ENCODE measurements at regions of chr7 and their contacts with region 1.

Region 1: DNA sequence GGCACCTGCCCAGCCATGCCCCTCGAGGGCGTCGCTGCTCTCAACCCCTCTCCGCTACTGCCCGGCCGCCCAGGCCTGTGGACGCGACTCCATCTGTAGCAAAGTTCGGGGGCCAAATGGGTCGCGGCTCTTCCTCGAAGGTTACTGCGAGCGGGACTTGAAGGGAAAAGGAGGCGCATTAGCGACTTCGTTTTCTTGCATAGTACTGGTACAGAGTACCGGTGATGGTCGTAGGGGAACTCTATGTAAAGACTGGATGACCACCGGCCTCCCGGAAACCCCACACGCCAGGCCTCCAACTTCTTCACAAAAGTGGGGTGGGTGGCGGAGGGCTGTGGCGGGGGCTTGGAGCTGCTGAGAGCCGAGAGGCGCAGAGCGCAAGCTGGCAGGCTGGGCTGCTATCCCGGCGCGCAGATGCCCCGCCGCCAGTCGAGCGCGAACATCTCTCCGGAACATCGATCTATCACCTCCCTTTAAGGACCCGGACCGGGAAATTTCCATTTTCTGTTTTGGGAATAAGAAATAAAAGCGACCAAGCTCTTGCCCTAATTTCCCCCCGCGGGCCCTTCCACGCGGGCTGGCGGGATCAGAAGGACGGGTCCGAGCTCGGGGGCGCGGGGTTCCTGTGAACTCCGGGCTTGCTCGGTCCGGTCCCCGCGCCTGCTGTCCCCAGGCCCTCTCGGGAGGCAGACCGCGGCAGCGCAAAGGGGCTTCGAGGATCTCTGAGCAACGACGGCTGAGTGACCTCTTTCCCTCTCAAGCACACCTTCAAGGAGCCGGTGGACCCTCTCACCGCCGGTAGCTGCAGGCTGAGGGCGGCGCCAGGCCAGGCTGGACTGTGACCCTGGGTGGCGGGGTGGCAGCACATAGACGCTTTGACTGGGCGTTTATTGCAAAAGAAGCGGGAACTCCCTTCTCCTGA is 12.2 kb upstream of the FEZF1 start:
- DNase-seq: peak in 1 of 2 experiments; percentile 81
- H3K4me3 ChIP-seq: peak overlapping the region; percentile 29 to 64 (median 51)
- H3K27ac ChIP-seq: no peak overlapping the region
- H3K4me1 ChIP-seq: peaks cover 3 to 23% (median 11%) of the 10 kb centered on the region in 4 experiments; a peak in 6 of 7 replicates
- H3K27me3 ChIP-seq: peaks cover 20 to 56% (median 39%) of the 10 kb centered on the region in 4 experiments
- CTCF ChIP-seq: no peak
- EP300 ChIP-seq: no peak
- POLR2A ChIP-seq: no peak
- RAD21 ChIP-seq: 0 out of 4 replicates have a peak, but pooled peaks of 1 of the 2 experiments have one; percentile 10

Region 2: GRCh38 chr7:122300211-122300932 is 16.4 kb before region 1 on chr7:
- CTCF ChIA-PET with region 1: interaction called, 10 read pairs
- POLR2A ChIA-PET with region 1: interaction called, 15 read pairs
- DNase-seq: peak in 1 of 2 experiments; percentile 74
- H3K4me3 ChIP-seq: peak overlapping the region; percentile 66 to 82 (median 76)
- H3K27ac ChIP-seq: no peak overlapping the region
- H3K4me1 ChIP-seq: peaks cover 5 to 28% (median 12%) of the 10 kb centered on the region in 4 experiments
- H3K27me3 ChIP-seq: peaks cover 41 to 68% (median 62%) of the 10 kb centered on the region in 4 experiments
- CTCF ChIP-seq: no peak
- EP300 ChIP-seq: no peak
- POLR2A ChIP-seq: no peak
- RAD21 ChIP-seq: no peak; a peak in 1 of 4 replicates

Region 3: GRCh38 chr7:122329145-122329802 is 12.5 kb after region 1 on chr7:
- CTCF ChIA-PET with region 1: interaction called, 11 read pairs
- POLR2A ChIA-PET with region 1: interaction called, 4 read pairs
- DNase-seq: peak in 1 of 2 experiments; percentile 59
- H3K4me3 ChIP-seq: peak overlapping the region in 1 of 4 experiments; percentile 27; a peak in 3 of 8 replicates
- H3K27ac ChIP-seq: no peak overlapping the region
- H3K4me1 ChIP-seq: peaks cover 5 to 25% (median 13%) of the 10 kb centered on the region in 4 experiments; a peak in 6 of 7 replicates
- H3K27me3 ChIP-seq: no peaks in the 10 kb centered on the region
- CTCF ChIP-seq: no peak
- EP300 ChIP-seq: peak in 1 of 2 experiments; percentile 75; a peak in 1 of 3 replicates
- POLR2A ChIP-seq: no peak
- RAD21 ChIP-seq: peak in 1 of 2 experiments; percentile 4; a peak in 1 of 4 replicates

Region 4: GRCh38 chr7:122528879-122529481 is 212.3 kb after region 1 on chr7:
- CTCF ChIA-PET with region 1: interaction called, 10 read pairs
- POLR2A ChIA-PET with region 1: interaction called, 3 read pairs
- DNase-seq: no peak
- H3K4me3 ChIP-seq: no peak overlapping the region
- H3K27ac ChIP-seq: no peak overlapping the region
- H3K4me1 ChIP-seq: no peaks in the 10 kb centered on the region
- H3K27me3 ChIP-seq: no peaks in the 10 kb centered on the region
- CTCF ChIP-seq: peak in 2 of 3 experiments; percentile 21 to 23; a peak in 2 of 4 replicates
- EP300 ChIP-seq: no peak
- POLR2A ChIP-seq: no peak
- RAD21 ChIP-seq: peak; percentile 52 to 71